Right cardiac atrium (tissue), 5 donors: ENCODE measurements at regions of chr17 and their contacts with region 1.

Region 1: DNA sequence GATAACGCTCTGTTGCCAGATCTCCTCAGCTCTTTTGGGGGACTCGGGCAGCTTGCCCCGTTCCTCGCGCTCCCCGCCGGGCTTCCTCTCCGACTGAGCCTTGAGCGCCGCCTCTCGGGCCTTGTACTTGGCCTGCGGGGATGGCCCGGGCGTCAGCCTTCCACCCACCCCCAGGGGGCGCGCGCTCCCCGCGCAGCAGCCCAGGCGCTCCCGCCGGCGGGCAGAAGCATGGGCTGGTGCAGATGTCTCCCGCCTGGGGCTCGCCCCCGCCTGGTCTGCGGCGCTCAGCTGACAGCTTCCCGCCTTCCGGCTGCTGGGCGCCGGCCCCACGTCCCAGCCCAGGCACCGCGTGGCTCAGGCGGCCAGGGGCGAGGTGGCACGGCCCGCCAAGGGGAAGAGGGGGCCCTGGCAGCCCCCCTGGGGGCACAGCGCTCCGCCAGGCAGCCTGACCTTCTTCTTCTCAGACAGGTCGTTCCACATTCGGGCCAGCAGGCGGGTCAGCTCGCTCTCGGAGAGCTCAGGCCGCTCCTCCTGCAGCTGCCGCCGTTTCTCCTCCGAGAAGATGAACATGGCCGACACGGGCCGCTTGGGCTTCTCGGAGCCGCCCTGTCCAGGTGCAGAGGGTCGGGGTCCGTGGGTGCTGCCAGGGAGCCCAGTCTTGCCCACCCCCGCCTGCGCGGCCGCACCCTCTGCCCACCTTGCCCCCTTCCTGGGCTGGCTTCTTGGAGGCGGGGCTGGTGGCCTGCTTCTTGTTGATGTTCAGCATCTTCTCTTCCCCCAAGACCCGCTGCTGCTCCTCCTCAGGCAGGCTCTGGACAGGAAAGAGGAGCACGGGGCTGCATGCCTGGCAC is 8.9 kb downstream of the UBTF start:
- DNase-seq: peak; percentile 88 to 96 (median 95)
- ATAC-seq: peak; percentile 87 to 93
- H3K4me3 ChIP-seq: no peak overlapping the region
- H3K27ac ChIP-seq: no peak overlapping the region
- H3K4me1 ChIP-seq: no peaks in the 10 kb centered on the region
- H3K27me3 ChIP-seq: no peaks in the 10 kb centered on the region

Region 2: DNA sequence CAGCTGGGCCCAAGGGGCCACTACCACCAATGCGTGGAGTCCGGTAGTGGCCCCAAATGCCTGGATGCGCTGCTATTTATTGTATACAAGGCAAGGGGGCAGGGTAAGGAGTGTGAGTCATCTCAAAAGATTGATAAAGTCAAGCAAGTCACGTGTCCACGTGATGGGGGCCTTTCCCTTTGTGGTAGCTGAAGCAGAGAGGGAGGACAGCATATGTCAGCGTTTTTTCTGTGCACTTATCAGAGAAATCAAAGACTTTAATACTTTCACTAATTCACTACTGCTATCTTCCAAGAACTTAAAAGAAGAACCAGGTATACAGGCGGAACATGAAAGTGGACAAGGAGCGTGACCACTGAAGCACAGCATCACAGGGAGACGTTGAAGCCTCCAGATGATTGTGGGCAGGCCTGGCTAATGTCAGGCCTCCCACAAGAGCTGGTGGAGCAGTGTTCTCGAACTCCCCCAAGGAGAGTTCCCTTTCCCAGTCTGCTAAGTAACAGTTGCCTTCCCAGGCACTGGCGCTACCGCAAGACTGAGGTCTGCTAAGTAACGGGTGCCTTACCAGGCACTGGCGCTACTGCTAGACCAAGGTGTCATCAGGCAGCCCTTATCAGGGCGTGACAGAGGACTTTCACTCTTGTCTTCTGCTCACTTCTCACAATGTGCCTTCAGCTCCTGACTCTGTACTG is 50.9 kb before region 1 on chr17:
- intact Hi-C with region 1: no loop called
- DNase-seq: no peak
- ATAC-seq: no peak
- H3K4me3 ChIP-seq: no peak overlapping the region
- H3K27ac ChIP-seq: no peak overlapping the region
- H3K4me1 ChIP-seq: no peaks in the 10 kb centered on the region
- H3K27me3 ChIP-seq: no peaks in the 10 kb centered on the region

Region 3: DNA sequence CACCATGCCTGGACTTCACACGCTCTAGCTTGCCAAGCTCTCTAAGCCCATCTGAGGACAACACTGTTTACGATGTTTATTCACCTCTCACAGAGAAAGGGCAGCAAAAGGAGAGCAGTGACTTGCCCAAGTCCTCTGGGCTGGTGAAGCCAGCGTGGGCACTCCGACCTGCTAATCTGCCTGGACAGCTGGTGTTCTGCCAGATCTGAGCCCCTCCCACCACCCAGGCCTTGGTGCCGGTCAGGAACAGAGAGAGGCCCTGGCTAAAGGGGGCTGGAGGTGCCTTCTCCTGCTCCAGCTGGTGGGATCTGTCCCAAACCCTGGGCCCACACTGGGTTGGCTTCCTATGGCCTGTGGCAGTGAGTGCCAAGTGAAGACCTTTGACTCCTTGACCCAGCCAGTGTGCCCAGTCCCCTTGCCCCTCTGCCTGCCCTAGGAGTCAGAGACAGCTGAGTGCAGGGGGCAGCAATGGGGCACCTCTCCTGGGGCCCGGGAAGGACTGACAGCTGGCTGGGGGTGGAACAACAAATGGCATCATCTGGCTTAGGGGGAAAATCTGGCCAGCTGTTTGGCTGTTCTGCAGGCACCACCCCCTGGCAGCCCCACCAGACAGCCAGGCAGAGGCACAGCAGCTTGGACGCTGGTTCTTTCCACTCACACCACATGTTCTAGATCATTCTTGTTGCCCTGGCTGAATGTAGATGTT is 59.1 kb after region 1 on chr17:
- intact Hi-C with region 1: no loop called
- DNase-seq: no peak
- ATAC-seq: peak in 1 of 2 donors; percentile 12
- H3K4me3 ChIP-seq: no peak overlapping the region
- H3K27ac ChIP-seq: no peak overlapping the region
- H3K4me1 ChIP-seq: no peaks in the 10 kb centered on the region
- H3K27me3 ChIP-seq: no peaks in the 10 kb centered on the region

Region 4: GRCh38 chr17:44324571-44325275 is 114.2 kb after region 1 on chr17 and contains the start of gene SLC25A39:
- intact Hi-C with region 1: loop called in 2 of 4 experiments (anchors 2 to 5 kb)
- DNase-seq: peak; percentile 93 to 98 (median 98)
- ATAC-seq: peak; percentile 93
- H3K4me3 ChIP-seq: peak within 1 kb of the TSS; percentile 87
- H3K27ac ChIP-seq: peak within 1 kb of the TSS; percentile 70
- H3K4me1 ChIP-seq: no peaks in the 10 kb centered on the region
- H3K27me3 ChIP-seq: no peaks in the 10 kb centered on the region
- total RNA-seq, gene SLC25A39: 56.7 to 69.9 (median 66.4) TPM

Region 5: GRCh38 chr17:44331249-44331760 is 120.7 kb after region 1 on chr17:
- intact Hi-C with region 1: loop called in 2 of 4 experiments (anchors 5 kb)
- DNase-seq: peak in 2 of 3 donors; percentile 63 to 77
- ATAC-seq: peak in 1 of 2 donors; percentile 9
- H3K4me3 ChIP-seq: no peak overlapping the region
- H3K27ac ChIP-seq: no peak overlapping the region
- H3K4me1 ChIP-seq: no peaks in the 10 kb centered on the region
- H3K27me3 ChIP-seq: no peaks in the 10 kb centered on the region